Prostate gland (tissue), 2 donors: ENCODE measurements at regions of chr16 and their contacts with region 1.

Region 1: DNA sequence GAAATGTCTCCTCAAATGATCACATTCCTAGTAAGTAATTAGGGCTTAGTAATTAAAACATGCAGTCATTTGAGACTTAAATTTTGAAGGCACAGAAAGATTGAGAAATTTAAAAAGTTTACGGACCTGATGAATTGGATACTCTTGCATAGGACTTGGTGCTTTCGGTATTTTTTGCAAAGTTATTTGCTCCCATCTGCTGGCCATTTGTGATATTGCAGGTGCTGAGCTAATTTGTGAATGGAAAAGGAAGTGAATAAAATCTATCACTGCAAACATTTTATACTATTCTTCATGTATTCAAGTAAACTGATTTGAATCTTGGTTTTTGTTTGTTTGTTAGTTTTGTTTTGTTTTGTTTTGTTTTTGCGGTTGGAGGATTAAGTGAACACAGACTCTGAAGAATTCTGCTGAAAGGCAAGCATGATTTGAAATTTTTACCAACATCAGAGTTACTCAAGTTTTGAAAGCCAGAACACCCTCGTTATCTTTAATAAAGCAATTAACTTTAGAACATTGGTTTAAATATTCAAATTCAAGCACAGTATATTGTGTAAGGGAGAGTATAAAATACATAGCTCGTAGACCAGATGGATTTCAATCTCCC is 689.5 kb upstream of the RBFOX1 start:
- DNase-seq: peak; percentile 45
- H3K4me3 ChIP-seq: no peak overlapping the region
- H3K27ac ChIP-seq: no peak overlapping the region
- H3K4me1 ChIP-seq: no peaks in the 10 kb centered on the region
- H3K27me3 ChIP-seq: no peaks in the 10 kb centered on the region
- CTCF ChIP-seq: peak; percentile 81 to 92 (median 85)
- POLR2A ChIP-seq: no peak

Region 2: DNA sequence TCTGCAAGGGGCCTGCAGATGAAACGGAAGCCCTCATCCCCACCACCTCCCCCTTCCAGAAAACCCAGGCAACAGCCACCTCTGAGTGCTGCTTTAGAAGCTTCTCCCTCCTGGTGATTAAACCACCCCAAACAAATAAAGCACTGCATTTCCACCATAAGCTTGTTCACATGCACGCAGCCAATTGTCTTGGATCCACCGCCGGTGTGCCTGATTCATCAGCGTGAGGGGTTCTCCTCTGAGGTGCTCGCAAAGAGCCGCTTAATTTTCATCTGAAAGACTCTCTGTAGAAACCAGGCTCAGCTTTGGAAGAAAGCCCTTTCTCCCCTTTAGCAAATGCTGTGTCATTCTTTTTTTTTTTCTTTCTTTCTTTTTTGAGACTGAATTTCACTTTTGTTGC is 1390.4 kb before region 1 on chr16:
- intact Hi-C with region 1: loop called (anchors 10 kb)
- DNase-seq: no peak
- H3K4me3 ChIP-seq: no peak overlapping the region
- H3K27ac ChIP-seq: no peak overlapping the region
- H3K4me1 ChIP-seq: no peaks in the 10 kb centered on the region
- H3K27me3 ChIP-seq: no peaks in the 10 kb centered on the region
- CTCF ChIP-seq: no peak
- POLR2A ChIP-seq: no peak

Region 3: DNA sequence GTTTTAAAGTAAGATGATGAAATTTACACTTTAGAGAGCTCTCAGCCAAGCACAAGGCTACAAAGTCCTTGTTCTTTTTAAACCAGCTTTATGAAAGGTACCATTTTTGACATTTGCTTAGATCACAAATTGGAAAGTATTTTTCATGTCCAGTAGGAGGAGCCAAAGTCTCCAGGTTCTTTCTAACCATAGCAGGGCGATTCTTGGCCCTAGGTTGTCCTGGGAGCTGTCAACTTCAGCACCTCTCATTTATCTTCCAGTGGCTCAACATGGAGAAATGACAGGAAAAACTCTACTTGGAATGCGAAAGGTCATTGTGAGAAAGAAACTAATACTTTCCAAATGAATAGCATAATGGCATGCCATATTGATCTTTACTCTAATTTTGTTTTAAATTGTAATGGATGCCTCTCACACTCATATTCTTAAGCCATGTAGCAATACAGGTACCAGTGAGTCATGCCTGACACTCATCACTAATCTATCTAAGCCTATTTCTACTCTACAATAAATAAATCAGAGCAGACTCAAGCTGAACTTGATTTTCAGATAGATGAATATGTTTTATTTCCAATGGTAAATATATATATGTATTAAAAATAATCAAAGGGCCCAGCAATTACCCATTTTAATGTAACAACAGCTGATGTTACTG is 626.5 kb before region 1 on chr16:
- intact Hi-C with region 1: loop called (anchors 10 kb)
- DNase-seq: no peak
- H3K4me3 ChIP-seq: no peak overlapping the region
- H3K27ac ChIP-seq: no peak overlapping the region
- H3K4me1 ChIP-seq: no peaks in the 10 kb centered on the region
- H3K27me3 ChIP-seq: peaks cover 13% of the 10 kb centered on the region
- CTCF ChIP-seq: peak in 2 of 4 experiments; percentile 13 to 30
- POLR2A ChIP-seq: no peak